ENCODE measurements at regions of chr3 and their contacts with region 1.

Region 1: GRCh38 chr3:63343674-63344073 is 65.6 kb downstream of the SYNPR start:
- DNase-seq: peak; percentile 97
- H3K4me3 ChIP-seq: no peak overlapping the region
- H3K27me3 ChIP-seq: peaks cover 2% of the 10 kb centered on the region
- CTCF ChIP-seq: no peak

Region 2: GRCh38 chr3:63818281-63819150 is 474.8 kb after region 1 on chr3:
- CTCF ChIA-PET with region 1: interaction called, 207 read pairs
- POLR2A ChIA-PET with region 1: no interaction called
- DNase-seq: no peak
- H3K4me3 ChIP-seq: no peak overlapping the region
- H3K27me3 ChIP-seq: no peaks in the 10 kb centered on the region
- CTCF ChIP-seq: peak; percentile 72

Measured in BJ (cell line).